HAP-1 (cell line): ENCODE measurements at regions of chr22 and their contacts with region 1.

Region 1: DNA sequence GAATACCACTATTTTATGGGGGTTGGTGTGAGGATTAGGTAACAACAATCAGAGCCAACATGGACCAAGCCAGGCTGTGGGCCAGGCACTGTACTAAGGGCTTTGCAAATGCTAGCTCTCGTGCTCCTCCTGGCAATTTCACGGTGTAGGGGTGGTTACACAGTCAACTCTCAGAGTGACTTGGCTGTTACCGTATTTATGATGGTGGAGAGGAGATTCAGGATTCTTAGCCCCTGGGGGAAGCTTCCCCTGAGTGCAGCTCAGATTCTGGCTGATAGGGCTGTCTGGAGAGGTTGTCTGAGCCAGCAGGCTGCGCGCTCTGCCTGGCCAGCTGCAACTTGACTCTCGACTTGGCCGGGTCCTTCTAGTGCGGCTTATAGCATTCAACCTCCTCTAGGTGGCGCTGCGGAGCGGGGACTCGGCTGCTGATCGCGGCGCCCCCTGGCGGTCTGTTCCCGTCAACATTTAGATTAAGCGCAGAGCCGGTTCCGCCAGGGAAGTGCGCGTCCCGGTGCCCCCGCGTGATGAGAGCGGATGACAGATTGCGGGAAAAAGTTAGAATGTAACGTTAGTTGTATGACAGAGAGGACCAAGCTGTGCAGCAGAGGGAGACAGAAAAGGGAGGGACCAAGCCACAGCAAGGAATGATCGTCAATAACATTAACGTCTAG is 4.5 kb upstream of the NCF4 start:
- DNase-seq: peak; percentile 71 to 93
- H3K4me3 ChIP-seq: no peak overlapping the region
- H3K4me1 ChIP-seq: no peaks in the 10 kb centered on the region
- H3K27me3 ChIP-seq: peaks cover 11% of the 10 kb centered on the region; the same call in 1 of the 2 replicates

Region 2: DNA sequence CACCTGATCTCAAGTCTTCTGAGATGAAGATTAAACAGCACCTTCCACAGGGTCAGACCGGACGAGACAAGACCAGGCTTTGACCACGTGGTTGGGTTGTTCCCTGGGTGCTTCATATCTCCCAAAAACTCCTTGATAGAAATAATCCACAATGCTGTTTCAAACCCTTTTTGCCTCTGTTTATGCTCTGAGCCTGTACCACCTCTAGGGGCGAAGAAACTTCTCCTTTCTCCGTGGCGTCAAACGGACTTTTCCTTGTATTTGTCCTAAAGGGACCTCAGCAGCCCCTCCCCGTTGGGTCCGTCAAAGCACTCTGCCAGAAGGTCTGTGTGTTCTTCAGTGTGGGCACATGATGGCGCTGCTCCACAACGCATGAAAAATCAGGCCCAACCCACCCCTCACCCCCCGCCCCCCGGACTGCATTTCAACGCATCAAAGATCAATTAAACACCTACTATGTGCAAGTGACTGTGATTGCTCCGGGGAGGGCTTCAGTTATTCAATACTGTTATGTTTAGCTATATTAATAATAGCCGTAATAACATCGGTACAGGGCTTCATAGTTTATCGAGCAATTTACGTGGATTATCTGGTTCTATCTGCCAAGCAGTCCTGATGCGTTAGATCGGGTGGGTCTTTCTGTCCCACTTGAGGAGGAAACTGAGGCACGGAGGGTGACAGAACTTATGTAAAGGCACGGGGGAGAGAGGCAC is 310.0 kb before region 1 on chr22:
- in situ Hi-C with region 1: loop called (anchors 5 kb)
- DNase-seq: peak; percentile 67 to 81
- H3K4me3 ChIP-seq: no peak overlapping the region
- H3K4me1 ChIP-seq: peaks cover 4% of the 10 kb centered on the region
- H3K27me3 ChIP-seq: peaks cover under 1% of the 10 kb centered on the region; the same call in 1 of the 2 replicates

Region 3: DNA sequence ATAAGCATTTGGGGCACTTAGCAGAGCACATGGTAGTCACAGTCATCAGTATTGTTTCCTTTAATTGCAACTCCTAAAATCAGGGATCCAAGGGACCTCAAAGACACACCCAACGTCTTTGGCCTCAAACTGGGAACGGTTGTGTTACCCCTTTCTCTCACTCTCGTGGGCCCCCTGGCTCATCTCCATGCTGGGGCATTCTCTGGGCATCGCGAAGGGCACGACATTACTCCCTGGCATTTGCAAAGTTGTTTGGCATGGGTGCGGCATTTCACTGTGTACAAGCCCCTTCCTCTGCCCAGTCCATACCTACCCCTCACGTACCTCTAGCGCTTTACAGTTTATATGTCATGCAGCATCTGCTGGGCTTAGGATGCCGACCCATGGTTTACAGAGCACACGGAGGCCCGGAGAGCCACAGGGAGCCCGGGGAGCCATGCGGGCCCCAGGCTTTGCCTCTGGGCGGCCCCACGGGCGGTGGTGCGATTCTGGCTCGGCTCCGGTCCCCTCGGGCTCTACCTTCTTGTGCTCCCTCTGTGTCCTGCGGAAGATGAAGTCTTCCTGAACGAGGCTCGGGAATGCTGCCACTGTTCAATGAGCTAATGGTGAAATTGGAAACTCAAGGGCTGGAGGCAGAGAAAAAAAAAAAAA is 130.8 kb before region 1 on chr22:
- in situ Hi-C with region 1: no loop called
- DNase-seq: no peak
- H3K4me3 ChIP-seq: no peak overlapping the region
- H3K4me1 ChIP-seq: no peaks in the 10 kb centered on the region
- H3K27me3 ChIP-seq: peaks cover 32% of the 10 kb centered on the region

Region 4: GRCh38 chr22:36741204-36741793 is 115.0 kb before region 1 on chr22:
- in situ Hi-C with region 1: no loop called
- DNase-seq: peak; percentile 25 to 37
- H3K4me3 ChIP-seq: no peak overlapping the region
- H3K4me1 ChIP-seq: peaks cover 6% of the 10 kb centered on the region
- H3K27me3 ChIP-seq: peaks cover 13% of the 10 kb centered on the region; the same call in 1 of the 2 replicates

Region 5: DNA sequence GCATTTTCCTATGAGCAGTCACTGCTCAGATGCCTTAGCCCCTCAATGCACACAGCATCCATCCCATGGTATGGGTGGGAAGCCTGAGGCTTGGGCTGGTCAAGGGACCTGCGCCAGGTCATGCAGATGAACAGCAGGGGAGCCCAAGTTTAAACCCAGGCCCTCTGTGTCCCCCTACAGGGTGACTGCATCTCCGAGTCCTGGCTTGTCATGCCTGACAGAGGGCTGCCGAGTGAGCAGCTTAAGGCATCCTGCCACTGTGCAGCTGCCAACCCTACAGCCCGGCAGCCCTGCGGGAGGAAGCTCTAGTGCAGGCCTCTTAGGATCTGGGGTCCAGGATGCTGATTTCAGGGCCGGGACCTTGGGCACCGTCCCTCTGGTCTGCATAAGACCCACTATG is 283.5 kb after region 1 on chr22:
- in situ Hi-C with region 1: no loop called
- DNase-seq: no peak
- H3K4me3 ChIP-seq: no peak overlapping the region
- H3K4me1 ChIP-seq: no peaks in the 10 kb centered on the region
- H3K27me3 ChIP-seq: peaks cover 9% of the 10 kb centered on the region

Region 6: GRCh38 chr22:37905534-37906363 is 1049.5 kb after region 1 on chr22 and contains the start of gene MICALL1:
- in situ Hi-C with region 1: no loop called
- DNase-seq: peak; percentile 81 to 83
- H3K4me3 ChIP-seq: peak within 1 kb of the TSS; percentile 44
- H3K4me1 ChIP-seq: peaks cover 10% of the 10 kb centered on the region
- H3K27me3 ChIP-seq: no peaks in the 10 kb centered on the region